Heart right ventricle (tissue), 16 donors: ENCODE measurements at regions of chr6 and their contacts with region 1.

Region 1: GRCh38 chr6:17865798-17866725 is 121.4 kb downstream of the KIF13A start:
- DNase-seq: peak; percentile 40 to 74
- ATAC-seq: peak; percentile 61 to 96 (median 90)
- H3K4me3 ChIP-seq: no peak overlapping the region
- H3K27ac ChIP-seq: peak overlapping the region in 9 of 10 donors; percentile 20 to 79 (median 63)
- H3K4me1 ChIP-seq: peaks cover 14 to 83% (median 69%) of the 10 kb centered on the region in 9 donors
- H3K27me3 ChIP-seq: no peaks in the 10 kb centered on the region
- CTCF ChIP-seq: no peak

Region 2: GRCh38 chr6:17910189-17910588 is 44.1 kb after region 1 on chr6:
- intact Hi-C with region 1: loop called in 1 of 10 experiments (anchors 5 kb)
- DNase-seq: no peak
- ATAC-seq: peak in 3 of 8 donors; percentile 19 to 41 (median 37)
- H3K4me3 ChIP-seq: no peak overlapping the region
- H3K27ac ChIP-seq: peak overlapping the region in 6 of 10 donors; percentile 8 to 83 (median 30)
- H3K4me1 ChIP-seq: peaks cover 4 to 86% (median 62%) of the 10 kb centered on the region in 9 donors
- H3K27me3 ChIP-seq: no peaks in the 10 kb centered on the region
- CTCF ChIP-seq: no peak